A549 (cell line): ENCODE measurements at regions of chr16 and their contacts with region 1.

Region 1: GRCh38 chr16:71707199-71707598 is 17.3 kb downstream of the PHLPP2 start:
- DNase-seq: no peak
- ATAC-seq: no peak
- H3K4me3 ChIP-seq: no peak overlapping the region
- H3K27ac ChIP-seq: peak overlapping the region; percentile 61 to 77; a peak in 5 of 6 replicates
- H3K4me1 ChIP-seq: peaks cover 36% of the 10 kb centered on the region
- CTCF ChIP-seq: no peak
- EP300 ChIP-seq: no peak
- POLR2A ChIP-seq: no peak
- RAD21 ChIP-seq: no peak

Region 2: DNA sequence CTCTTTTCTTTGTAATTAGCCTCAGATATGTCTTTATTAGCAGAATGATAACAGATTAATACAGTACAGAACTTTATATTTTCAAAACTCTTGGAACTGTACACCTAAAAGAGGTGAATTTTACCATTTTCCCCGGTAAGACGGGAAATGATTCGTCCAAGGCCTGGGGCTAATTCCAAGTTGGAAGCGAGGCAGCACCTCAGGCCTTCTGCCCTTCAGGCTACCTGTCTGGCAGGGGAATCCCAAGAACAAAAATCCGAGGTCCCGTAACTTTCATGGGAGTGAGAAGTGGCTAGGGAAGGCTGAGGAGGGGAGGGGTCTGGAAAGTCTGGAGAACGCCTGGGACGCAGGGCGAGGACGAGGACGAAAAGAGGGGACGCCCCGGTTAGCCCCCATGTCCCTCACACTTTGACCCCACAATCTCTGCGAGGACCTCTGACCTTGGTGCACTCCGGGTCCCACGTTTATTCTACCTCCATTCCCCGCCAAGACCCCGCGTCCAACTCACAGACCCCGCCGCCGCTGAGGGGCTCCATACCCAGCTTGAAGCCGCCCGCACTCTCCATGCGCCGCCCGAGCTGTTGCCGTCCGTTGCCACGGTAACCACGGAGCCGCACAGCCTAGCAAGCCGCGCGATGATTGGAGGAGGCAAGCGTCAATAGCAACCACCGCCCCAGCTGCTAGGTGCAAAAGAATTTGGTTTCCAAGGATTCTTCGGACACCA is 476.9 kb before region 1 on chr16 and contains the start of gene HYDIN:
- CTCF ChIA-PET with region 1: no interaction called
- POLR2A ChIA-PET with region 1: no interaction called
- DNase-seq: peak; percentile 67 to 78
- ATAC-seq: peak; percentile 97 to 98
- H3K4me3 ChIP-seq: peak within 1 kb of the TSS; percentile 44
- H3K27ac ChIP-seq: no peak within 1 kb of the TSS
- H3K4me1 ChIP-seq: no peaks in the 10 kb centered on the region
- CTCF ChIP-seq: no peak
- EP300 ChIP-seq: no peak
- POLR2A ChIP-seq: no peak
- RAD21 ChIP-seq: no peak
- polyA plus RNA-seq, gene HYDIN: 0.30 and 0.41 TPM in 2 replicates

Region 3: DNA sequence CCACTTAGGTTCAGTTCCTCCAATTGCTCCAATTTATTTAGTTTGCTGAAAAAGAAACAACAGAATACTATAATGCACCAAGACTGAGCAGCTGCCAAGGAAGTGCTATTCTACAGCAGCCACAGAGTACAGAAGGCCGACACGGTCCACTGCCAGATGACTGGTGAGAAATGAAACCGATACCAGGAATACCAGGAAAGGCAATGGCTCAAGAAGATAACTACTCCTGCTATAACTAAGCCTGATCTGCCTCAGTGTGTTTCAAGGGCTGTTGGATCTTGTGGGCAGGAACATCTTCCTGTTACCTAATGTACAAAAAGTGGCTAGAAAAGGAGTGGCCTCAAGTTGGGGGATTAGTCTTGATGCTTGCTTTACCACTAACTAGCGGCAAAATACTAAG is 48.4 kb before region 1 on chr16:
- CTCF ChIA-PET with region 1: no interaction called
- POLR2A ChIA-PET with region 1: interaction called, 13 read pairs
- DNase-seq: no peak
- ATAC-seq: no peak
- H3K4me3 ChIP-seq: no peak overlapping the region
- H3K27ac ChIP-seq: no peak overlapping the region
- H3K4me1 ChIP-seq: no peaks in the 10 kb centered on the region
- CTCF ChIP-seq: no peak
- EP300 ChIP-seq: no peak
- POLR2A ChIP-seq: no peak
- RAD21 ChIP-seq: no peak